OCI-LY7 (cell line): ENCODE measurements at regions of chr16 and their contacts with region 1.

Region 1: DNA sequence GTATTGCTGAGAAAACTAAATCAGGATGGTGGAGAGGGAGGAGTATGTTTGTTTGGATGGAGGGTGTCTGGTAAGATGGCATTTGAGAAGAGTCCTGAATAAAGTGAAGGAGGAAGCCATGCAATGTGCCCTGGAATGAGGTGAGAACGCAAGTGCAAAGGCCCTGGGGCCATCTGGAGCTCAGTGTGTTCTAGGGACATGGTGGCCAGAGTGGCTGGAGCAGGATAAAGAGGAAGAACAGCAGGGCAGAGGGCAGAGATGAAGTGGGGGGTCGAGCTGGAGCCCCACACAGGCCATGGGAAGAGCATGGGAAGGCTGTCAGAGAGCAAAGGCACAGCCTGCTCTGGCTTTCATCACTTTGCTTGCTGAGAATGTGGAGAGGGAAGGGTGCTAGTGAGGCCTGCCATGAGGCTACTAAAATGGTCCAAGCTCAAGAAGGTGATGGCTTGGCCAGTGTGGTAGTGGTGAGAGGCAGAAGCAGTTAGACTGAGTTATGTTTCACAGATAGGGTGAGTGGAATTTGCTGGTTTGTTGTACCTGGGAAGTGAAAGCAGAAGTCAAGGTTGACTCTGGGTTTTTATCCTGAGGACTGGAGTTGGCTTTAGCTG is 234.1 kb downstream of the FOXL1 start:
- DNase-seq: no peak
- H3K4me3 ChIP-seq: no peak overlapping the region
- H3K27ac ChIP-seq: no peak overlapping the region
- H3K4me1 ChIP-seq: no peaks in the 10 kb centered on the region
- CTCF ChIP-seq: no peak

Region 2: GRCh38 chr16:86831361-86831760 is 18.9 kb after region 1 on chr16:
- CTCF ChIA-PET with region 1: no interaction called
- POLR2A ChIA-PET with region 1: no interaction called
- intact Hi-C with region 1: loop called (anchors 1 kb)
- DNase-seq: peak; percentile 10
- H3K4me3 ChIP-seq: no peak overlapping the region
- H3K27ac ChIP-seq: no peak overlapping the region
- H3K4me1 ChIP-seq: no peaks in the 10 kb centered on the region
- CTCF ChIP-seq: peak; percentile 38; the same call in 1 of the 2 replicates